GM12878 (cell line): ENCODE measurements at regions of chr2 and their contacts with region 1.

Region 1: DNA sequence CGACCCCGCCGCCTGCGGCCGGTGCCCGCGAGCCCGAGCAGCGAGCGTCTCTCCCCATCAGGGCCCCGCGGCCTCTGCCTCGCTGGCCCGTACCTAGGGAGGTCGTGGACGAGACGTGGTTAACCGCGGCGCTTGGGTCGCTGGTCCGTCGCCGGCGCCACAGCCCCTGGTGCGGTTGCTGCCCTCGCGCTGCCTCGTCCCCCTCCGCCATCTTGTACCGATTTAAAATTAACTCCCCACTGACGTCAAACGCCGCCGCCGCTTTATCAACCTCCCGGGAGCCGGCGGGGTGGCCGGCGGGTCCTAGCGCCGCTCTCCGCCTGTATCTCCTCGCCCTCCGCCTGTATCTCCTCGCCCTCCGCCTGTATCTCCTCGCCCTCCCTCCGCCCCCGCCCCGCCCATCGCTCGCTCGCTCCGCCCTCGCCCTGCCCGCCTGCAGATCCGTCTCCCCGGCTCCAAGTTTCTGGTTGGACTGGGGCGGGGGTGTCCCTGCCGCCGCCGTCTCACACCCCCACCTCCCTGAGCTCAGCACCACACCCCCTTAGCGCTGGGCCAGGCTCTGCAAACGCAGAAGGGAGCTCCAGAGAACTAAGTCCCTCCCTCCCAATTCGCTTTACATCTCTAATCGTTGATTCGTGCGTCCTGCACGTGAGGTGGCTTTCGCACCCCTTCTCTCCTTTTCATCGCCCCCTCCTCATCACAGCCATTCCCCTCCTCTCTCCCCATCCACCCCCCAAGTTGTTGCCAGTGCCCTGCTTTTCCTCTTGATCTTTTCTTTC is at the start of gene ATL2:
- DNase-seq: peak; percentile 59
- ATAC-seq: peak; percentile 86
- H3K4me3 ChIP-seq: peak within 1 kb of the TSS; percentile 90
- H3K27ac ChIP-seq: peak within 1 kb of the TSS; percentile 92
- H3K4me1 ChIP-seq: no peaks in the 10 kb centered on the region
- H3K27me3 ChIP-seq: no peaks in the 10 kb centered on the region
- CTCF ChIP-seq: no peak
- EP300 ChIP-seq: no peak; a peak in 1 of 4 replicates
- POLR2A ChIP-seq: peak; percentile 86
- RAD21 ChIP-seq: no peak
- polyA plus RNA-seq, gene ATL2: 8.6 to 12.6 TPM

Region 2: DNA sequence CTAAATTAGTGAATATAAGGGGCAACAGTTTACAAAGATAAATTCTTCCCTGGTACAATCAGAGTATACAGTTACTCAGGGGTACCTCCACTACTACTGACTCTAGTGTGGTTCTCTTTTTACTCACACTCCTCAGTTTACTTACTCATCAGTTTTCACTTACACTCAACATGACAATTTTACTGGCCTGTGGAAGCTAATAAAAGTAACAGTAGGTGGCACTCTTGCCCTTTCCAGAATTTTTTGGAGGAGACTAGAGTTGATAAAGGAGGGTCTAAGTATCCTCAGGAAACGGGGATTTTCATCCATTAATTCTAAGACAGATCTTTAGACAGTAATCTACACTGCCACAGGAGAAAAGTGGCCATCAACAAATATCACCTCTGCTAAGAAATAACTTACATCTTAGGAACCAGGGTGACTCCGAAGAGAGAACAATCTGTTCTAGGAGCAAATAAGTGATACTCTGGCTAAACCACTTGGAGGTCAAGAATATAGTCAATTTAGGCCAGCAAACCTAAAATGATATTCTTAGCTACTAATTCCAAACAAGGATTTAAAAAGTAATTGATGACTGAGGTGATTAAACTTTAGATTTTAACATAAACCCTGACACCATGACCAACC is 61.4 kb before region 1 on chr2:
- CTCF ChIA-PET with region 1: interaction called, 47 read pairs
- POLR2A ChIA-PET with region 1: interaction called, 4 read pairs
- RAD21 ChIA-PET with region 1: interaction called, 22 read pairs
- SMC1A ChIA-PET with region 1: interaction called, 58 read pairs
- in situ Hi-C with region 1: no loop called
- intact Hi-C with region 1: loop called (anchors 5 kb)
- DNase-seq: peak; percentile 11
- ATAC-seq: peak; percentile 76
- H3K4me3 ChIP-seq: no peak overlapping the region
- H3K27ac ChIP-seq: no peak overlapping the region
- H3K4me1 ChIP-seq: no peaks in the 10 kb centered on the region
- H3K27me3 ChIP-seq: no peaks in the 10 kb centered on the region
- CTCF ChIP-seq: peak; percentile 57 to 66 (median 66)
- EP300 ChIP-seq: no peak
- POLR2A ChIP-seq: no peak
- RAD21 ChIP-seq: peak; percentile 90

Region 3: GRCh38 chr2:38362232-38362631 is 15.0 kb before region 1 on chr2:
- CTCF ChIA-PET with region 1: interaction called, 26 read pairs
- POLR2A ChIA-PET with region 1: interaction called, 4 read pairs
- RAD21 ChIA-PET with region 1: interaction called, 5 read pairs
- SMC1A ChIA-PET with region 1: interaction called, 36 read pairs
- in situ Hi-C with region 1: no loop called
- intact Hi-C with region 1: no loop called
- DNase-seq: no peak
- ATAC-seq: peak; percentile 30
- H3K4me3 ChIP-seq: no peak overlapping the region
- H3K27ac ChIP-seq: no peak overlapping the region
- H3K4me1 ChIP-seq: no peaks in the 10 kb centered on the region; the same call in 1 of the 2 replicates
- H3K27me3 ChIP-seq: no peaks in the 10 kb centered on the region
- CTCF ChIP-seq: no peak
- EP300 ChIP-seq: no peak
- POLR2A ChIP-seq: no peak
- RAD21 ChIP-seq: no peak

Region 4: GRCh38 chr2:38465789-38466127 is 88.5 kb after region 1 on chr2:
- CTCF ChIA-PET with region 1: interaction called, 66 read pairs
- POLR2A ChIA-PET with region 1: interaction called, 7 read pairs
- RAD21 ChIA-PET with region 1: interaction called, 50 read pairs
- SMC1A ChIA-PET with region 1: interaction called, 19 read pairs
- in situ Hi-C with region 1: no loop called
- intact Hi-C with region 1: loop called (anchors 1 kb)
- DNase-seq: no peak
- ATAC-seq: peak; percentile 94
- H3K4me3 ChIP-seq: no peak overlapping the region
- H3K27ac ChIP-seq: no peak overlapping the region
- H3K4me1 ChIP-seq: no peaks in the 10 kb centered on the region
- H3K27me3 ChIP-seq: no peaks in the 10 kb centered on the region
- CTCF ChIP-seq: peak; percentile 68 to 76 (median 68)
- EP300 ChIP-seq: no peak
- POLR2A ChIP-seq: no peak
- RAD21 ChIP-seq: peak; percentile 82

Region 5: GRCh38 chr2:38740851-38741731 is 363.9 kb after region 1 on chr2:
- CTCF ChIA-PET with region 1: no interaction called
- POLR2A ChIA-PET with region 1: no interaction called
- RAD21 ChIA-PET with region 1: no interaction called
- SMC1A ChIA-PET with region 1: interaction called, 4 read pairs
- in situ Hi-C with region 1: no loop called
- intact Hi-C with region 1: loop called (anchors 10 kb)
- DNase-seq: no peak
- ATAC-seq: peak; percentile 10
- H3K4me3 ChIP-seq: no peak overlapping the region
- H3K27ac ChIP-seq: no peak overlapping the region
- H3K4me1 ChIP-seq: no peaks in the 10 kb centered on the region
- H3K27me3 ChIP-seq: no peaks in the 10 kb centered on the region
- CTCF ChIP-seq: peak in 2 of 3 experiments; percentile 40 to 41; a peak in 4 of 6 replicates
- EP300 ChIP-seq: no peak
- POLR2A ChIP-seq: no peak; the same call in 1 of the 2 replicates
- RAD21 ChIP-seq: peak; percentile 41